PC-9 (cell line): ENCODE measurements at regions of chr14 and their contacts with region 1.

Region 1: DNA sequence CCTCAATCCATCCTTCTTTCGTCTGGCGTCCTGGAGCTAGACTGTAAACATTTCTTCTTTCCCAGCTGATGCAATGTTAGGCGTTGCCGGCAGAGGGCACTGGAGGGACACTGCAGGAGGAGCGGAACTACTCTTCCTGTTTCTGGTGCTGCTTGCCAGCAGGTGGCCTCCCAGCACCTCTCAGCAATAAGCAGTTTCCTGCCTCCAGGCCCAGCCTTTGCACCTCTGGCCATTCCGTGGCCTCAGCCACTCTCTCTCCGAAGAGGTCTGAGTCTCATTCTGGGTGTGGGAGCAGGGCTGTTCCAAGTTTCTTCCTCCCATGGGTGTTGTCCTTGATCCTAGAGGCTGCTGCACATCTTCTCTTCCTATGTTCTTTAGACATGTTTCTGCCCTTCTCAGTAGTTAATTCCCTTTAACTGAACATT is 7.5 kb upstream of the ASPG start:
- DNase-seq: peak; percentile 77 to 85
- H3K4me3 ChIP-seq: no peak overlapping the region
- H3K27ac ChIP-seq: no peak overlapping the region
- H3K4me1 ChIP-seq: no peaks in the 10 kb centered on the region
- H3K27me3 ChIP-seq: peaks cover 10% of the 10 kb centered on the region; the same call in 1 of the 2 replicates
- CTCF ChIP-seq: peak; percentile 99

Region 2: GRCh38 chr14:103808403-103809001 is 269.5 kb before region 1 on chr14:
- CTCF ChIA-PET with region 1: interaction called, 9 read pairs
- POLR2A ChIA-PET with region 1: no interaction called
- intact Hi-C with region 1: loop called (anchors 1 kb)
- DNase-seq: peak; percentile 49 to 69
- H3K4me3 ChIP-seq: no peak overlapping the region
- H3K27ac ChIP-seq: no peak overlapping the region
- H3K4me1 ChIP-seq: no peaks in the 10 kb centered on the region
- H3K27me3 ChIP-seq: no peaks in the 10 kb centered on the region
- CTCF ChIP-seq: peak; percentile 92

Region 3: DNA sequence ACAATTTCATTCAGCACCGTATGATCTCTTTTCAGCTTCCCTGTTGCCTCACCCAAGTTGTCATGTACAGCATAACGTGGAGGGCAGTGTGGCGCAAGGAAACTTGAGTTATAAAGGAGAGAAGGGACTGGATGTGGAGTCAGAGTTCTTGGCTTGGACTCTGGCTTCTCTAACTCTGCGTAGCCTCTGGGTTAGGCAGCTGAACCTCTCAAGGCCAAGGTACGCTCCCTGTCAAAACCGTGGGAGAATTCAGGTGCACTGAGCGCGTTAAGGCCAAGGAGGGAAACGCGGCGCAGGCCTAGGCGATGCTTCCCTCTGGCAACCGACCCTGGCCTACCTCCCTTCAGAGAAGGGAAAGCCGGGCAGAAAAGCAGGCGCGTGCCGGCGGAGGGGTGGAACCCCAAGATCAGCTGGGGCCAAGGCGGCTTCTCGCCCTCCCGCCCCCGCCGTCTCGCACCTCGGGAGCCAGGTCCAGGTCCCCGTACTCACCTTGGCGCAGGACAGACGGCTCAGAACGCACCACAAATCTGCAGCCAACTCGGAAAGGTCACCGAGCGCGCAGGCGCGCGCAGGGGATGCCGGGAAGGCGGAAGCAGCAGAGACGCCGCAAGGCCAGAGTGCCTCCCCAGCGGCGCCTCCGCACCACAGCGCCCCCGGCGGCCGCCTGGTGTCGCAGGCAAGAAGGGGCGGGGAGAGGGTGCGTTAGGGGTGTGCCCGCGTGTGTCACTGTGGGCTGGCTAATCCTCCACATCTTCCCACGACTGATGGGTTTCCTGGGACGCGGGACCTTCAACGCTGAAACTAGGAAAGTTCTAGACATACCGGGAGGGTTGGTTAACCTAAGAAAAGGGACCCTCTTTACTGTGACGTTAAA is 156.8 kb before region 1 on chr14:
- CTCF ChIA-PET with region 1: interaction called, 27 read pairs
- POLR2A ChIA-PET with region 1: interaction called, 7 read pairs
- intact Hi-C with region 1: loop called (anchors 5 kb)
- DNase-seq: peak; percentile 78 to 96
- H3K4me3 ChIP-seq: peak overlapping the region; percentile 100
- H3K27ac ChIP-seq: peak overlapping the region; percentile 90
- H3K4me1 ChIP-seq: peaks cover 14% of the 10 kb centered on the region
- H3K27me3 ChIP-seq: no peaks in the 10 kb centered on the region
- CTCF ChIP-seq: peak; percentile 92

Region 4: DNA sequence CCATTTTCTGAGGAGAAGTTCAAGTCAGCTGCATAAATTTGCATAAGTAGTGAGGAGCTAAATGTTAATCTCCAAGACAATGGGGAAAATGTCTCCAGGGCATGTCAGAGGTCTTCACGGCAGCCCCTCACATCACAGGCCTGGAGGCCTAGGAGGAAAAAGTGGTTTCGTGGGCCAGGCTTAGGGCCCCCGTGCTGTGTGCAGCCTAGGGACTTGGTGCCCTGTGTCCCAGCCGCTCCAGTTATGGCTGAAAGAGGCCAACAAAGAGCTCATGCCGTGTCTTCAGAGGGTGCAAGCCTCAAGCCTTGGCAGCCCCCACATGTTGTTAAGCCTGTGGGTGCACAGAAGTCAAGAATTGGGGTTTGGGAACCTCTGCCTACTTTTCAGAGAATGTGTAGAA is 93.8 kb before region 1 on chr14:
- CTCF ChIA-PET with region 1: interaction called, 3 read pairs
- POLR2A ChIA-PET with region 1: no interaction called
- intact Hi-C with region 1: loop called (anchors 5 kb)
- DNase-seq: no peak
- H3K4me3 ChIP-seq: no peak overlapping the region
- H3K27ac ChIP-seq: no peak overlapping the region
- H3K4me1 ChIP-seq: no peaks in the 10 kb centered on the region
- H3K27me3 ChIP-seq: no peaks in the 10 kb centered on the region
- CTCF ChIP-seq: no peak

Region 5: GRCh38 chr14:104130974-104131651 is 53.1 kb after region 1 on chr14:
- CTCF ChIA-PET with region 1: no interaction called
- POLR2A ChIA-PET with region 1: no interaction called
- intact Hi-C with region 1: loop called (anchors 1 kb)
- DNase-seq: peak; percentile 45 to 48
- H3K4me3 ChIP-seq: no peak overlapping the region
- H3K27ac ChIP-seq: no peak overlapping the region
- H3K4me1 ChIP-seq: no peaks in the 10 kb centered on the region
- H3K27me3 ChIP-seq: peaks cover 19% of the 10 kb centered on the region; the same call in 1 of the 2 replicates
- CTCF ChIP-seq: peak; percentile 90

Region 6: GRCh38 chr14:104331871-104332605 is 254.0 kb after region 1 on chr14:
- CTCF ChIA-PET with region 1: no interaction called
- POLR2A ChIA-PET with region 1: no interaction called
- intact Hi-C with region 1: no loop called
- DNase-seq: no peak
- H3K4me3 ChIP-seq: no peak overlapping the region
- H3K27ac ChIP-seq: no peak overlapping the region
- H3K4me1 ChIP-seq: no peaks in the 10 kb centered on the region
- H3K27me3 ChIP-seq: peaks cover 87% of the 10 kb centered on the region
- CTCF ChIP-seq: peak; percentile 25; the same call in 1 of the 2 replicates

Region 7: GRCh38 chr14:104563742-104564615 is 485.9 kb after region 1 on chr14:
- CTCF ChIA-PET with region 1: no interaction called
- POLR2A ChIA-PET with region 1: no interaction called
- intact Hi-C with region 1: loop called (anchors 5 kb)
- DNase-seq: peak in 1 of 2 experiments; percentile 62
- H3K4me3 ChIP-seq: no peak overlapping the region
- H3K27ac ChIP-seq: no peak overlapping the region
- H3K4me1 ChIP-seq: no peaks in the 10 kb centered on the region
- H3K27me3 ChIP-seq: peaks cover 91% of the 10 kb centered on the region
- CTCF ChIP-seq: peak; percentile 80

Region 8: DNA sequence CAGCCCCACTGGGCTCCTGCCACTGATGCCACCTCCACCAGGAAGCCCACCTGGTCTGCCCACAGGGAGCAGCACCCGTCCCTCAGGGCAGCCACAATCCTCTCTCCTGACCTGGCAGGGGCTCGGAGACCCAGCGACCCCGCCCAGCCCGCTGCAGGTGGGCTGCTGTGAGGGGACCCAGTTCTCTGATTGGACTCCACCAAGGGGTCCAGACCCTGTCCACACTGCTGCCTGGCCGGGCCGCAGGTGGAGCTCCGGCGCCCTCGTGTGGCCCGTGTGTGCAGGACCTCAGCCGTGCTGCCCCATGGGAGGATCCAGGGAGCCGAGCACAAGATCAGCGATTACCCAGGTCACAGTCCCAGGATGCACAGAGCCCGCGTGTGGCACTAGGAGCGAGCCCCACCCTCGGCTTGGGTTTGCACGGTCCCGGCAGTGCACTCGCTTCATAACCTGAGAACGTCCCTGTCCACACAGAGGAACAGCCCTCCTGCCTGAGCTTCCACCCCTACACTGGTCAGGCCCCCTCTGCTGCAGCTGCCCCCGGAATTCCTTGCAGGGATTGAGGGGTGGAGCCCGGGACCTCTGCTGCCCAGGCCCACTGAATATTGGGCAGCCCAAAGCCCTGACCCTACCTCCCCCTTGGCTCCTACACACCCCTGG is 562.0 kb after region 1 on chr14:
- CTCF ChIA-PET with region 1: no interaction called
- POLR2A ChIA-PET with region 1: no interaction called
- intact Hi-C with region 1: loop called (anchors 2 kb)
- DNase-seq: peak; percentile 42 to 62
- H3K4me3 ChIP-seq: no peak overlapping the region
- H3K27ac ChIP-seq: no peak overlapping the region
- H3K4me1 ChIP-seq: no peaks in the 10 kb centered on the region
- H3K27me3 ChIP-seq: peaks cover 56% of the 10 kb centered on the region
- CTCF ChIP-seq: peak; percentile 92